GM13976 (cell line): ENCODE measurements at regions of chr1 and their contacts with region 1.

Region 1: DNA sequence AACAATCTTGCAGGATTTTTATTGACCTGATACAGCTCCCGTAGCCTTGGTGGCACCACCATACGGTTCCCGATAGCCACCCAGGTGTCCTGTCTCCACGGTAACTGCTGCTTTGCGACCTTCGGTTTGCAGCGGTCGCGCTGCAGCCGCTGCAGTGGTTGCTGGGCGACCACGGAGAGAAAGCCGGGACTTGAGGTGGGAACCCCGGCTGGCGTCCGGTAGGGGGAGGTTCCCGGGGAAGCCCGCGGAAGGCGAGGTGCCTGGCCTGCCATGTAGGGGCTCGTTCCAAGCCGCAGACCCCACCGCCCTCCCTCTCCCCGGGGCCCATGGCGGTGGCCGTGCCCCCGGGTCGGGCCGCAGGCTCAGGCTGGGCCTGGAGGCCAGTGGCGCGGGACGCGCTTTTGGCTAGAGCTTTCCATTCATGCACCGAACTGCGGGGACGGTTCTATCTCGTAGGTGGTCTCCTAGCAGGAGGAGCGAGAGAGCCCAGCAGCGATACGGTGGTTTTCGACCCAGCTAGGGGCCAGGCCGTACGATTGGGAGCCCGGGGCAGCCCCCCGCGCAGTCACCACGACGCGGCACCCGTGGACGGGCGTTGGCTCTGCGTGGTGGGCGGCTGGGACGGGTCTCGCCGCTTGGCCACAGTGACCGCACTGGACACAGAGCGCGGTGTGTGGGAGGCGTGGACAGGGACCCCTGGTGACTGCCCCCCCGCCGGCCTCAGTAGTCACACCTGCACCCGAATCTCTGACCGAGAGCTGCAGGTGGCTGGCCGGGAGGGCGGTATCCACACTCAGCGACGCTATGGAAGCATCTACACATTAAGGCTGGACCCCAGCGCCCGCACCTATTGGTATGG is at the start of gene KLHDC9:
- DNase-seq: peak; percentile 96
- CTCF ChIP-seq: no peak

Region 2: DNA sequence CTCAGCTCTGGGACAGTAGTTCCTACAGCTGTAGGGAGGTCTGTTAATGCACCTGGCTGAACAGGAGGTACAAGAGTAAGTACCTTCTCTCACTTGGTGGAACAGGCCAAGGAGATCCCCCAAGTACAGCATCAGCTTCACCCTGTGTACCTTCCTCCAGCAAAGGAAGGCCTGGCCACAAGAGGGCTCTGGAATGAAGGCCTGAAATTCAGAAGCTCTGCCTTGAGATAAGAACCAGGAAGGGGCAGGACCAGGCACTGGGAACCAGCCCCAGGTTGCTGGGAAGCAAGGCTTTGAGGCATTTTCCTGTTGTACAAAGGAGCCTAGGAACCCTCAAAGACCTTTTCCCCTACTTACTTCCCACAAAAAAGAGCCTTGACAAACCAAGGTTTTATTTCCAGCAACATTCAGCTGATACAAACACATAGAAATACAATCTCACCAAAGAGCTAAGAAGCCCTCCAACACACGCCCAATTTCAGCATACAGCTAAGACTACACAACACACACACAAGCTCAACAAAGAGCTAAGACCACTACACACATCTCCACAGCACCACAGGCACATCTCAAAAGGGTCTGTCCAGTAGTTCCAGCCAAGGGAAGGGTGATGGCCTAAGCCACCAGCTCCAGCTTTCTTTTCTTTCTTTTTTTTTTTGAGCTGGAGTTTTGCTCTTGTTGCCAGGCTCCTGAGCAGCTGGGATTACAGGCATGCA is 101.0 kb before region 1 on chr1:
- in situ Hi-C with region 1: loop called (anchors 10 kb)
- DNase-seq: peak; percentile 69
- CTCF ChIP-seq: peak; percentile 72